Right ventricle myocardium inferior (tissue), 1 donor: ENCODE measurements at regions of chr1 and their contacts with region 1.

Region 1: DNA sequence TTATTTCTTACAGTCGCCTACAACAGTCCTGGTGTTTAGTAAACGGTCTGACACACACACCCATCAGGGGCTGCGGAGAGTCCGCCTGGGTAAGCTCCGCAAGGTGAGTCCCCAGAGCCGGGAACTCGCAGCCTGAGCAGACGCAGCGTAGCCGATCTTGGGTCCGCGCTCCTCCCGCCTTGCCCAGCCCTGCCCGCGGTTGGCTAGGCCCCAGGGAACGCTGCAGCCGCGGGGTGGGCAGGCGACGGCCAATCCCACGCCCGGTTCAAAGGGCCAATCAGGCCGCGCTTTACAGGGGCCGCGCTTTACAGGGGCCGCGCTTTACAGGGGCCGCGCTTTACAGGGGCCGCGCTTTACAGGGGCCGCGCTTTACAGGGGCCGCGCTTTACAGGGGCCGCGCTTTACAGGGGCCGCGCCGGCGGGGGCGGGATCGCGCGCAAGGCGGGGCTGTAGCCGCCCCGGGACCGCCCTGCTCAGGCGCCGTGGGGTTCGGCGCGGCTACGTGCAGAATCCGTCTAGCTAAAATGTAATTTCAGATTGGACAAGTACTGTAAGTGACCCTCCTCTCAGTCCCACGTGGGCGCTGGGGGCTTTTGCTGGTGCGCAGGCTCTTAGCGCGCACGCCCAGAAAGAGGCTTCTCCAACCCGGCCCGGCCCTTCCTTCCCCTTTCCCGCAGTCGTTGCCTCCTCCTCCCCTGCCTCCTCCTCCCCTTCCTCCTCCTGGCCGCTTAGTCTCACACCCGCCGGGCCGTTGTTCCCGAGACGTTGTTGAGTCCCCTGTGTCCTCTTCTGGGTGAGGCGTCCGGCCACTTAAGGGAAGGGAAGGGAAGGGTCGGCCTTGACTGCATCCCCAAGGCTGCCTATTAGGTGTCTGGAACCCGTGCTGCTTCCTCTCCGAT is at the start of gene FGGY:
- DNase-seq: peak; percentile 99
- ATAC-seq: peak; percentile 96
- total RNA-seq, gene FGGY: 28.5 TPM

Region 2: GRCh38 chr1:58903514-58904298 is 392.9 kb before region 1 on chr1:
- intact Hi-C with region 1: loop called (anchors 5 kb)
- DNase-seq: peak; percentile 98
- ATAC-seq: peak; percentile 96

Region 3: DNA sequence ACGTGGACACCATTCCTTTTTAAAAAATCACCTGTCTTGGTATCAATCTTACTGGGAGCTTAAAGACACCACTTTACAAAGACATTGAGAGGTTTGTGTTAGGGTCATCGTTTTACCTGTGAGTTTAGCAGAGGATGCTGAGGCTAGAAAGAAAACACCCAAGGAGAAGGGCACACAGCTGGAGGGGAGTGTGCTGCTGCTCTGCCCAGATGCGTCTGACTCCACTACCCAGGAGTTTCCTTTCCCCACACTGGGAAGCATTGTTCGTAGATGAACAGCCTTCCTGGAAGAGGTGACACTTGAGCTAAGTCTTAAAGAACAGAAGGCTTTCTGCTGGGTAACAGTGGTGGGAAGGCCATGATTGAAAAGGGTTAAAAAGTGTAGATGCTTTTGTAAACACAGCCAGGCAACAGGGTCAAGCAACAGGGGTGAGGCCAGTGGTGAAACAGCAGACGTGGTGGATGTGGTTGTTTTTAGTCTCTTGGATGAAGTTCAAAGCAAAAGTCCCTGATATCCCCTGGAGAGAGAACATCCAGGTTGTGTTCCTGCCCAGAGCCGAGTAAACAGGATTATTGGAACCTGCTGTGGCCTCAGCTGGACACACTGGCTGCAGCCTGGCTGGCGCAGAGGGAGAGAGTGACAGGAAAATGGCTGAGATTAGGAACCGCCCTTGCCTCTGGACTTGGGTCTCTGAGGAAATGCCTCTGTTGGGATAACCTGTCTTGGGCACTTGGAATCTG is 314.2 kb before region 1 on chr1:
- intact Hi-C with region 1: loop called (anchors 10 kb)
- DNase-seq: peak; percentile 70
- ATAC-seq: peak; percentile 87

Region 4: GRCh38 chr1:59143133-59143487 is 153.5 kb before region 1 on chr1:
- intact Hi-C with region 1: loop called (anchors 2 kb)
- DNase-seq: no peak
- ATAC-seq: no peak

Region 5: DNA sequence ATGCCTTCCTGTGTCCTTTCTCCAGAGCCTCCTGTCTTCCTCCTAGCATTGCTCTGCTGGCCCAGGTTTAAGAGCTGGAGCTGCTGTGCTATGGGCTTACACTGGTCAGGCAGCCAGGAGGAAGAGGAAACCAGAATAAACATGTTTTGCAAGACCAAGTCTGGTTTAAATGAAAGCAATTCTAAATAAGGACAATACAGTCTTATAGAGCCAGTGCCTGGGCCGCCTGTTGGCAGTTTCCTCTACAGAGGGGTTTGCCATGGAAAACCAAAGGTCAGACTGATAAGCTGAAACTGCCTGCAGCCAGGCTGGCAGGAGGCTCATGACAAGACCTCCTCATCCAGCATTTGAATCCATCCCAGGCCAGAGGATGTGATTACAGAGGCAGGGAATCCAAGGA is 92.6 kb before region 1 on chr1:
- intact Hi-C with region 1: loop called (anchors 10 kb)
- DNase-seq: peak; percentile 81
- ATAC-seq: peak; percentile 90

Region 6: GRCh38 chr1:59261537-59261936 is 35.1 kb before region 1 on chr1:
- intact Hi-C with region 1: no loop called
- DNase-seq: no peak
- ATAC-seq: peak; percentile 88

Region 7: DNA sequence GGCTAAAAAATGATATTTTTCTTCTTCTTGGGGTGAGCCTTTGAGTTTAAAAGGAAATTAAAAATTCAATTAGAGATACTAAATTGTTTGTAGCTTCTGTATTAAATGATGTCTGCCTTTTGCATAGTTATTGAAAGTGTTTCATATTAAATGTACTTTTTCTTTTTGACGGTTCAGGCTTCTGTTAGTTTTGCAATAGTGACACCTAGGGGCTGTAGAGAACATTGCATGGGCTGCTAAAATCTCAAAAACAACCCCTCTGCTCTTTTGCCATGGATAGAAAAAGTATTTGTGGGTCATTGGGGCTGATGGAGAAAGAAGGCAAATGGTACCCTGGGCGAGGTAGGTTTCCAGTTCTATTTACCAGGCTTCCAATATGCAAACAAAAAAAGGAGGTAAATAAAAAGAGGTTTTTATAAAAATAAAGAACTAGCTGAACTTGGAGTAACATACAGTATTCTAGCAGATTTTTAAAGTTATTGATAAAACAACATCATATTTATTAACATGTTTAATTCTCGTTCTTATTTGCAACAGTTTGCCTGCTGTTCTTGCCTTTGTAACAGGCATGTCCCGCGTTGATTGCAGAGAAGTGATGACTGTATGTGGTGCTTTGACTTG is 402.7 kb after region 1 on chr1:
- intact Hi-C with region 1: loop called (anchors 5 kb)
- DNase-seq: no peak
- ATAC-seq: no peak